Adrenal gland (tissue), 19 donors: ENCODE measurements at regions of chr9 and their contacts with region 1.

Region 1: GRCh38 chr9:99819856-99820684 is 1.6 kb upstream of the NR4A3 start:
- DNase-seq: peak; percentile 94 to 97 (median 96)
- H3K4me3 ChIP-seq: peak overlapping the region; percentile 13 to 85 (median 48)
- H3K27ac ChIP-seq: peak overlapping the region; percentile 97 to 100 (median 98)
- H3K4me1 ChIP-seq: peaks cover 10 to 21% of the 10 kb centered on the region in 2 donors
- H3K27me3 ChIP-seq: no peaks in the 10 kb centered on the region
- CTCF ChIP-seq: peak in 1 of 6 experiments; percentile 6
- POLR2A ChIP-seq: peak; percentile 77 to 80

Region 2: GRCh38 chr9:99266255-99267023 is 553.6 kb before region 1 on chr9:
- intact Hi-C with region 1: loop called in 1 of 2 experiments (anchors 10 kb)
- DNase-seq: peak; percentile 75 to 91 (median 84)
- H3K4me3 ChIP-seq: peak overlapping the region in 1 of 4 donors; percentile 41
- H3K27ac ChIP-seq: no peak overlapping the region
- H3K4me1 ChIP-seq: no peaks in the 10 kb centered on the region
- H3K27me3 ChIP-seq: no peaks in the 10 kb centered on the region
- CTCF ChIP-seq: peak; percentile 65 to 90 (median 84)
- POLR2A ChIP-seq: no peak

Region 3: GRCh38 chr9:99773468-99774138 is 46.5 kb before region 1 on chr9:
- intact Hi-C with region 1: no loop called
- DNase-seq: no peak
- H3K4me3 ChIP-seq: no peak overlapping the region
- H3K27ac ChIP-seq: no peak overlapping the region
- H3K4me1 ChIP-seq: no peaks in the 10 kb centered on the region
- H3K27me3 ChIP-seq: no peaks in the 10 kb centered on the region
- CTCF ChIP-seq: no peak
- POLR2A ChIP-seq: no peak

Region 4: GRCh38 chr9:99906403-99907207 is 86.5 kb after region 1 on chr9 and contains the start of gene STX17:
- intact Hi-C with region 1: loop called in 1 of 2 experiments (anchors 5 kb)
- DNase-seq: peak; percentile 68 to 88 (median 78)
- H3K4me3 ChIP-seq: peak within 1 kb of the TSS; percentile 70 to 95 (median 80)
- H3K27ac ChIP-seq: peak within 1 kb of the TSS; percentile 94 to 97 (median 97)
- H3K4me1 ChIP-seq: peaks cover 0 to 14% of the 10 kb centered on the region in 2 donors
- H3K27me3 ChIP-seq: no peaks in the 10 kb centered on the region
- CTCF ChIP-seq: peak in 2 of 6 experiments; percentile 1 to 10
- POLR2A ChIP-seq: peak in 1 of 2 donors; percentile 70
- total RNA-seq, gene STX17: 15.9 to 47.2 (median 32.7) TPM